Mucosa of descending colon (tissue), 3 donors: ENCODE measurements at regions of chr10 and their contacts with region 1.

Region 1: DNA sequence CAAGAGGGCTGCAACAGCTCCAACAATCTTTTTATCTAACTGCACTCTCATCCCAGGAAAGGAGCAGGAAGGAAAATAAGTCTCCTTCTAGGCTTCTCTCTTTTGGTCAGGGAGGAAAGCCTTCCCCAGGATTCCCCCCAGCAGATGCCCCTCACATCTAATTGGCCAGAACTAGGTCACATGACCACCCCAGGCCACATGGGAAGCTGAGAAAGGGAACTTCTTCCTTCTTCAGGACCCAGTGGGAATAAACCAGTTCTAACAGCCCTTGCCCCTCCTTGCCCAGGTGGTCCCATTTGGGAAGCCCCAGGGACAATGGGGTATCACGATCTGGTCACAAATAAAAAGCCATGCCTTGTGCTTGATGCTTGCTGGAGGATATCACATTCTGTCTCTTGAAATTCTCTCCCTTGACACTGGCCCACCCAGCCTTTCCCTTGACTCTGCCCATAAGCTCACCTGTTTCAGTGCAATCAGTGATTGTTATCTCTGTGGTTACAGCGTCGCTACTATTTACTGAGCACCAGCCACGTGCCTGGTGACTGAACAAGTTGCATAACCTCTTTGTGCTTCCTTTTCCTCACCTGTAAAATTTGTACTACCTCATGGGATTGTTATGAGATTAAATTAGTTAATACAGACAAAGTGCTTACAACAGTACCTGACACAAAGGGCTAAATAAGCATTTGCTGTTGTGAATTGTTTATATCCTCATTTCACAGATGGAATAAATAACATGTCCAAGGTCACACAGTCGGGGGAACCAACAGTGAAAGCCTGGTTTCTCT is 9.0 kb upstream of the TACR2 start:
- DNase-seq: peak in 2 of 3 donors; percentile 60 to 78
- ATAC-seq: peak; percentile 89
- H3K4me3 ChIP-seq: no peak overlapping the region
- H3K4me1 ChIP-seq: peaks cover 30% of the 10 kb centered on the region
- CTCF ChIP-seq: no peak

Region 2: DNA sequence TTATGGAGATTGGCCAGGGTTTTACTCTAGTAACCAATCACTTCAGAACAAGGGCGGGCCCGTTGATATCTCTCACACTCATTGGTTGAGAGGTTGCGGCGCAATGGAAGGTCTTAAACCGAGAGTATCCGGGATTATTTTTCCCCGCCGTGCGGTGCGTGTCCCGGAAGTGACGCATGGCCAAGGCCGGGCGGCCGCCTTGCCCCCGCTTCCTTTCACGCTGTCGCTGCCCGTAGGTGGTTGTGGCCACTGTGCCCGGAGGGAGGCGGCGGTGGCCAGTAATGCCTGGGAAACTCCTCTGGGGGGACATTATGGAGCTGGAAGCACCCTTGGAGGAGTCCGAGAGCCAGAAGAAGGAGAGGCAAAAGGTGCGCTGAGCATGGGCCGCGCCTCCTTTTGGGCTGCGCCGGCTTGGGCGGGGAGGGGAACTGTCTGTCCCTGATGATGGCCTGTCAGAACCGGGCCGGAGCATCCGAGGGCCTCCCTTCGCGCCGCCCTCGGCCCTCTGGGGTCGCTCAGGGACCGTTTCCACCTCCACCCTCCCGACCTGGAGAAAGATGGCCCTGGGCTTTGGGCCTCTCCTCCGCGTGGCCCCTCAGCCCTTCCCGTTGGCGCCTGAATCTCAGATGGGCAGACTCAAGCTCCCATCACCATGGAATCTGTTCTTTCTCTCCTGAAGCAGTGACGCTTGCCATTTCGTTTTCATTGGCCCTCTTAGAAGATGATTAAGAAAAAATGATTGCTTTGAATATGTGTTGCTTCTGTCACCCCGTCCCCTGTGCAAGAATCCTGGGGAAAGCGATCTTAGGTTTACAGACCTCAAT is 524.4 kb before region 1 on chr10 and contains the start of gene DDX50:
- intact Hi-C with region 1: no loop called
- DNase-seq: peak; percentile 95 to 98 (median 96)
- ATAC-seq: peak; percentile 98
- H3K4me3 ChIP-seq: peak within 1 kb of the TSS; percentile 78
- H3K4me1 ChIP-seq: peaks cover 11% of the 10 kb centered on the region
- CTCF ChIP-seq: peak; percentile 13
- total RNA-seq, gene DDX50: 15.2 to 40.6 (median 24.6) TPM

Region 3: DNA sequence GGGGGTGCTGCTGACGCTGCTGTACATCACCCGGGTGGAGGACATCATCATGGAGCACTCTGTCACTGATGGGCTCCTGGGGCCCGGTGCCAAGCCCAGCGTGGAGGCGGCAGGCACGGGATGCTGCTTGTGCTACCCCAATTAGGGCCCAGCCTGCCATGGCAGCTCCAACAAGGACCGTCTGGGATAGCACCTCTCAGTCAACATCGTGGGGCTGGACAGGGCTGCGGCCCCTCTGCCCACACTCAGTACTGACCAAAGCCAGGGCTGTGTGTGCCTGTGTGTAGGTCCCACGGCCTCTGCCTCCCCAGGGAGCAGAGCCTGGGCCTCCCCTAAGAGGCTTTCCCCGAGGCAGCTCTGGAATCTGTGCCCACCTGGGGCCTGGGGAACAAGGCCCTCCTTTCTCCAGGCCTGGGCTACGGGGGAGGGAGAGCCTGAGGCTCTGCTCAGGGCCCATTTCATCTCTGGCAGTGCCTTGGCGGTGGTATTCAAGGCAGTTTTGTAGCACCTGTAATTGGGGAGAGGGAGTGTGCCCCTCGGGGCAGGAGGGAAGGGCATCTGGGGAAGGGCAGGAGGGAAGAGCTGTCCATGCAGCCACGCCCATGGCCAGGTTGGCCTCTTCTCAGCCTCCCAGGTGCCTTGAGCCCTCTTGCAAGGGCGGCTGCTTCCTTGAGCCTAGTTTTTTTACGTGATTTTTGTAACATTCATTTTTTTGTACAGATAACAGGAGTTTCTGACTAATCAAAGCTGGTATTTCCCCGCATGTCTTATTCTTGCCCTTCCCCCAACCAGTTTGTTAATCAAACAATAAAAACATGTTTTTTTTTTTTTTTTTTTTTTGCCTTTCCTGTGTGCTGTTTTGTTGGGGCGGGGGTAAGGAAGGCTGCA is 81.4 kb after region 1 on chr10:
- intact Hi-C with region 1: loop called in 1 of 2 experiments (anchors 5 kb)
- DNase-seq: peak in 2 of 3 donors; percentile 47 to 54
- ATAC-seq: peak; percentile 42
- H3K4me3 ChIP-seq: no peak overlapping the region
- H3K4me1 ChIP-seq: peaks cover 5% of the 10 kb centered on the region
- CTCF ChIP-seq: no peak